Activated CD4-positive, alpha-beta T cell treated with anti-CD3 and anti-CD28 coated beads for 36 hours (primary cell): ENCODE measurements at regions of chr9 and their contacts with region 1.

Region 1: GRCh38 chr9:86022687-86023266 is 76.6 kb downstream of the GOLM1 start:
- DNase-seq: peak; percentile 12
- ATAC-seq: peak; percentile 26
- H3K4me3 Mint-ChIP-seq: no peak overlapping the region
- H3K27ac Mint-ChIP-seq: peak overlapping the region; percentile 76
- H3K4me1 Mint-ChIP-seq: peaks cover 13% of the 10 kb centered on the region
- H3K27me3 Mint-ChIP-seq: no peaks in the 10 kb centered on the region

Region 2: DNA sequence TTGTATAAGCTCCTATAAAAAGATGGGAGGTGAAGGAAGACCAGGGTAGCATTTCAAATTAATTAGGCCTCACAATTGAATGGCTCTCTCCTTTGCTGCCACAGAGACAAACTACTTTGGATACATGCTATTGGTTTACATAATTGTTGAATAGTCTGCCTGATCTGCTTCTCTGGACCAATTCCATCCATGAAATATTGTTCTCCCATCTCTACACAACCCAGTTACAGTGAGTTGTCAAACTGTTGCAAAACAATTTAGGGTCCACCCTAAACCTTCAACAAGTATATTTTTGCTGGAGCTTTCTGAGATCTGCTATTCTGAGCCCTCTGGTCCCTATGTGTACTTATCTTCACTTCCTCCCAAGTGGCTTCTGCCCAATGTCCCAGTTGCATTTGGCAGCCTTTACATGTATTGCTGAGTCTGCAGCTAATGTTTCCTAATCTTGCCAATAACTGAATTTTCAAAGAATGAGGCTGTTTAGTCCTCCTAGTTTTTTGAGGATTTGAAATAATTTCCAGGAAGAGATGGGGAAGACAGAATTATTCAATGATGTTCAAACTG is 320.0 kb before region 1 on chr9:
- CTCF ChIA-PET with region 1: no interaction called
- POLR2A ChIA-PET with region 1: no interaction called
- intact Hi-C with region 1: loop called in 1 of 2 experiments (anchors 10 kb)
- DNase-seq: no peak
- ATAC-seq: no peak
- H3K4me3 Mint-ChIP-seq: no peak overlapping the region
- H3K27ac Mint-ChIP-seq: no peak overlapping the region
- H3K4me1 Mint-ChIP-seq: peaks cover 34% of the 10 kb centered on the region
- H3K27me3 Mint-ChIP-seq: no peaks in the 10 kb centered on the region

Region 3: DNA sequence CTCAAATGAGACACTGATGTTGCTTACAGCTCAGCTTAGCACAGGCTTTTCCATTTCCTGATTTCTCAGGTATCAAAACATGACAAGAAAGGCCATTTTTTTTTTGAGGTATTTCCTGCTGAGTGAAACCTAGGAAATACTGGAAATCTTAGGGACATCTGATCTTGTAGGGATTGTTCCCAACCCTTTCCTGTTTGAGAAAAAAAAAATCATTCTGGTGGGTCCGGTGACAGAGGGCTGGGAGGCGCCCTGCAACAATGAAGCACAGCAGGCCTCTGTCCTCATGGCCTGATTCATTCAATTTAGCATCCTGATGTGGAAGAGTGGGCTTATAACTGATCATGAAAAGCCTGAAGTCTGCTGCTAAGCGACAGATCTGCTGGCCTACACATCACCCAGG is 239.7 kb after region 1 on chr9:
- CTCF ChIA-PET with region 1: no interaction called
- POLR2A ChIA-PET with region 1: no interaction called
- intact Hi-C with region 1: loop called in 1 of 2 experiments (anchors 10 kb)
- DNase-seq: no peak
- ATAC-seq: no peak
- H3K4me3 Mint-ChIP-seq: no peak overlapping the region
- H3K27ac Mint-ChIP-seq: no peak overlapping the region
- H3K4me1 Mint-ChIP-seq: peaks cover 4% of the 10 kb centered on the region
- H3K27me3 Mint-ChIP-seq: no peaks in the 10 kb centered on the region